Dorsolateral prefrontal cortex (tissue), 120 donors: ENCODE measurements at regions of chr6 and their contacts with region 1.

Region 1: GRCh38 chr6:98845211-98846020 is 11.0 kb downstream of the POU3F2 start:
- DNase-seq: peak; percentile 75 to 96 (median 90)
- H3K4me3 ChIP-seq: peak overlapping the region; percentile 35 to 89 (median 71)
- H3K27ac ChIP-seq: peak overlapping the region; percentile 66 to 99 (median 96)
- H3K27me3 ChIP-seq: peaks cover 0 to 33% (median 0%) of the 10 kb centered on the region in 45 donors
- CTCF ChIP-seq: peak; percentile 70 to 93 (median 86)

Region 2: GRCh38 chr6:97077380-97077779 is 1768.0 kb before region 1 on chr6:
- intact Hi-C with region 1: loop called in 1 of 2 experiments (anchors 10 kb)
- DNase-seq: no peak
- H3K4me3 ChIP-seq: no peak overlapping the region
- H3K27ac ChIP-seq: peak overlapping the region in 1 of 59 donors; percentile 14
- H3K27me3 ChIP-seq: no peaks in the 10 kb centered on the region
- CTCF ChIP-seq: peak in 24 of 56 donors; percentile 7 to 50 (median 20)

Region 3: DNA sequence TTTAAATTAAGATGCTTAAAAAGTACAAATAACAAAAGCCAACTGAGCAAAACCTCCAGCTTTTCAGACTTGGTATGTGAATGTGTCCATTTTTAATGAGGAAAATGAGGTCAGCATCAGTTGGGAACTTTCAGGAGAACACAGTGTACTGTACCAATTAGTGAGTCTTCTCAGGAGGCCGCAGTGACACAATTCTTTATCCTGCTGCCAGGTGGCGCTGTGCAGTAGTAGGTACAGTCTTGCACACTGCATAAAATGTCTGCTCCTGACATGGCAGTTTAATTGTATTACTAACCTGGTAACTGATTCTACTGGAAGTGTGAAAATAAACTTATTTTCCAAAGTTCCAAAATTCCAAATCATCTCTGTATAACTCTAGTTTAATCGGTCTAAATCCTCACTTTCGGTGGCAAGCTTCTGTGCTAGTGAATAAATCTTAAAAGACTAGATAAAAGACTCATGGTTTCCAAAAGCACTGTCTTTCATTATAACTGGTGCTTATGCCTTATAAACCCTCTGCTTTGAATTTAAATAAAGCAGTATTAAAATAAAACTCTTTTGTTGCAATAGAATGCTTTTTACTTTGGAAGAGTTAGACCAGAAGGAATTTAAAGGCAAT is 1347.6 kb before region 1 on chr6:
- intact Hi-C with region 1: loop called (anchors 5 to 10 kb)
- DNase-seq: peak; percentile 48 to 91 (median 81)
- H3K4me3 ChIP-seq: peak overlapping the region in 3 of 59 donors; percentile 9 to 27 (median 15)
- H3K27ac ChIP-seq: peak overlapping the region in 46 of 59 donors; percentile 5 to 79 (median 48)
- H3K27me3 ChIP-seq: no peaks in the 10 kb centered on the region
- CTCF ChIP-seq: peak; percentile 64 to 96 (median 84)

Region 4: DNA sequence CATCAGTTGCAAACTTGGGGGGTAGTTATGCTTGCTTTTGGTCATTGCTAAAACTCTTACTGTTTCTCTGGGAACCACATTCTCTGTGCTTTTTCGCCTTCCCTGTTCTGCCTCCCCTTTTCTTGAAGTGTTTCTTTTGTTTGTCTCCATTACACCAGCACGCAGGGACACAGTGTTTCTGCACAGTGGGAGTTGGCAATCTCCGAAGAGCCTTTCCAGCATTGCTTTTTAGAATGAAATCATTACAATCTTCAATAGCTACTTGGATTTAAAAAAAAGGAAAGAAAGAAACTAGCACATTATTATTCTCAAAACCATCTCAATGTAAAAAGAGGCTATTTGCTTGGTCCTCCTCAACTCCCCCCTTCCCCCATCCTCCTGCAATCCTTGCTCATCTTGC is 1025.7 kb before region 1 on chr6:
- intact Hi-C with region 1: loop called in 1 of 2 experiments (anchors 10 kb)
- DNase-seq: peak in 3 of 10 donors; percentile 31 to 45 (median 38)
- H3K4me3 ChIP-seq: peak overlapping the region in 9 of 59 donors; percentile 0 to 39 (median 6)
- H3K27ac ChIP-seq: peak overlapping the region in 42 of 59 donors; percentile 2 to 82 (median 48)
- H3K27me3 ChIP-seq: no peaks in the 10 kb centered on the region
- CTCF ChIP-seq: no peak

Region 5: DNA sequence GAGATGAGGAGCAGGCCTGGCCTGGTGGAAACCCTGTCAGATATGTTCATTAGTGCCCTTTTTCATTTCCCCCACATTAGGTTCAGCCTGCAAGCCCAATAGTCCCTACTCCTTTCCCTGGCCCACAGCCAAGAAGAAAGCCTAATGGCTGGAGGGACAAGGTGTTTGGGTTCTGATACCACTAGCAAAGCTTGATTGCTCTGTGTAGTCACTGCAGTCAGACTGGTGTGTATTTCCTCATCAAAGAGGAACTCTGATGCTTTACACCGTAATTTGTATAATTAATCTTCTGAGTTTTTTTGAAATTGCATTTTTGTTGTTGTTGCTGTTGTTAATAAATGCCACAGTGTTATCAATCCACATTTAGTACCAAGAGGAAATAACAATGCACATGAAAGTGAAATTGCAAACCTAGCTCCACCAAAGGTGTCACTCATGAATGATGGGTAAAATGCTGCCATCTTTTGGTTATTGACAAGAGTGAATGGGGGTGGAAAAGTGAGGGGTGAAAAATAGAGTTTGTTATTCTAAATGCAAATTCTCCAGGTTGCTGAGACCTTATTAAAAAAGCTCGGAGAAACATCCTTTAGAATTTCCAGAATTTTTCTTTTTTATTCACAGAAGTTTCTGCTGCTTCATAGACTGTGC is 331.2 kb before region 1 on chr6:
- intact Hi-C with region 1: no loop called
- DNase-seq: no peak
- H3K4me3 ChIP-seq: no peak overlapping the region
- H3K27ac ChIP-seq: peak overlapping the region in 1 of 59 donors; percentile 3
- H3K27me3 ChIP-seq: no peaks in the 10 kb centered on the region
- CTCF ChIP-seq: peak in 49 of 56 donors; percentile 8 to 65 (median 41)

Region 6: DNA sequence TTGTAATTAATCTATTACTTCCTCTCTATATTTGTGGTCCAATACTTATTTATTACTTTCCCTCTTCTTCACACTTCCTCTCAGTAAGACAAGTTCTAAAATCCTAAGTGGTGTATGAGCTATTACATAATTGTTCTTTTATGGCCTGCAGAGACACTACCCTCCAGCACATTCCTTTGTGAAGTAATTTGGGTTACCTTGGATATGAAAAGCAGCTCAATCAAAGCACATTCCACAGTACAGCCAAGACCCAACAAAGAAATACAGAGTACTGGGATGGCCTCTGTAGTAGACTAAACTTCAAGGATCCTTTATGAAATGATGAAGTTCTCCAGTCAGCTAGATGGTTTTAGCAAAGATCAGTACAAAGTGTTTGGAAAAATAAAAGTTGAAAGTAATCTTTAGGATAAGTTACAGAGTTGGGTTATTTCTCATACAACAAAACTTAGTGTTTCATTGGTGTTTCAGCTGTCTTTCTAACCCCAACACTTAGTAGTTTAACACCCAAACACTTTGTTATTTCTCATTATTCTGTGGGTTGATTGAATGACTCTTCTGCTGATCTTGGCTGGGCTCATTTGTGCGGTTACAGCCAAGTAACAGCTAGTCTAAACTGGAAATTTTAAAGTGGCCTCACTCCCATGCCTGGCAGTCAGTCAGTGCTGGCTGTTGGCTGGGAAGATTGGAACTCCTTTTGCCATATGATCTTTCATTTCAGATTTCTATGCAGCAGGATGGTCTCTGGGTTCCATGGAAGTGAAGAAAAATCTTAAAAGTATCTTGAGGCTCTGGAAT is 172.5 kb before region 1 on chr6:
- intact Hi-C with region 1: no loop called
- DNase-seq: peak in 1 of 10 donors; percentile 33
- H3K4me3 ChIP-seq: no peak overlapping the region
- H3K27ac ChIP-seq: peak overlapping the region in 20 of 59 donors; percentile 3 to 65 (median 31)
- H3K27me3 ChIP-seq: no peaks in the 10 kb centered on the region
- CTCF ChIP-seq: no peak

Region 7: DNA sequence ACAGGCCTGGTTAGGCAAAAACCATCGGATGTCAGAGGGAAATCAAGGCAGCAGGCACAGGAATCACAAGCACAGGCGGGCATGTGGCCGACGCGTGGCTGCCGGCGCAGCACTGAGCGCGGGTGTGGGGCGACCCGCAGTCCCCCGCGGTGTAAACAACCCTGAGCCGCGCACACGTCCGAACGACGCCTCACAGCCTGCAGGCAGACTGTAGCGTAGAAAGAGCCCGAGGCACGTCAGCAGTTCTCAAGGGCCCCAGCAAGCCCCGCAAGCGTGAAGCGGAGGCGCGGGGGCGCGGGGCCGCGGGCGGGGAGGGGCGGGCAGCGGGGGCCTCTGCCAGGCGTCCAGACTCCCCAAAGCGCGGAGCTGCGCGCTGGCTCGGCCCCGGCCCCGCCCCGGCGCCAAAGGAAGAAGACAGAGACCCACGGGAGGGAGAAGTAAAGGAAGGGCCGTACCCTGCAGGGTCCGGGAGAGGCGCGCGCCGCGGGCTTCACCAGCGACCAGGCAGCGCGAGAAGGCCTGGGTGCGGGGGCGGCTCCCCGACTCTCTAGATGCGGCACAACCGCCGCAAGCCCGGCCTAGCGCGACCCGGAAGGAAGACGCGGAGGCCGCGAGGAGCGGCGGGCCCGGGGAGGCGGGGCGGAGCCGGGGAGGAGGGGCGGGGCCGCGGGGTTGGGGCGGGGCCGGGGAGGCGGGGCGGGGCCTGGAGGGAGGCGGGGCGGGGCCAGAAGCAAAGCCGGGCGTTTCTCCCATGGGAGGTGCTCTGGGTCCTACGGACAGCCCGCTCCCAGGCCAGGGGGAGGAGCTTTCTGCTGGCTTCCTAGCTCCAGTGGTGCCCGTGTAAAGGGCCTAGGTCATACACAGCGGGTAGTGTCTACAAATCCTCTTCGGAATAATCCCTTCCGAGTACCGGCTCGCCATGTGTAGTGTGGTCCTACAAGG is 102.2 kb after region 1 on chr6 and contains the start of gene FBXL4:
- intact Hi-C with region 1: loop called in 1 of 2 experiments (anchors 5 kb)
- DNase-seq: peak; percentile 67 to 88 (median 84)
- H3K4me3 ChIP-seq: peak within 1 kb of the TSS; percentile 29 to 96 (median 81)
- H3K27ac ChIP-seq: peak within 1 kb of the TSS; percentile 41 to 94 (median 87)
- H3K27me3 ChIP-seq: no peaks in the 10 kb centered on the region
- CTCF ChIP-seq: peak in 4 of 56 donors; percentile 6 to 22 (median 12)
- total RNA-seq, gene FBXL4: 18.5 to 32.9 (median 24.0) TPM